ENCODE measurements at regions of chr18 and their contacts with region 1.

Region 1: GRCh38 chr18:24726727-24727492 is 266.5 kb downstream of the HRH4 start:
- DNase-seq: peak; percentile 75
- H3K4me3 ChIP-seq: peak overlapping the region; percentile 3 to 47 (median 19)
- H3K27ac ChIP-seq: no peak overlapping the region
- H3K4me1 ChIP-seq: peaks cover 0 to 4% (median 1%) of the 10 kb centered on the region in 4 donors
- H3K27me3 ChIP-seq: peaks cover 0 to 32% (median 0%) of the 10 kb centered on the region in 4 donors
- CTCF ChIP-seq: peak; percentile 63 to 80 (median 80)
- EP300 ChIP-seq: no peak
- POLR2A ChIP-seq: no peak

Region 2: GRCh38 chr18:24488824-24489493 is 238.0 kb before region 1 on chr18:
- intact Hi-C with region 1: loop called (anchors 5 kb)
- DNase-seq: no peak
- H3K4me3 ChIP-seq: no peak overlapping the region
- H3K27ac ChIP-seq: no peak overlapping the region
- H3K4me1 ChIP-seq: peaks cover 0 to 4% (median 0%) of the 10 kb centered on the region in 4 donors
- H3K27me3 ChIP-seq: no peaks in the 10 kb centered on the region
- CTCF ChIP-seq: peak; percentile 79 to 88 (median 85)
- EP300 ChIP-seq: no peak
- POLR2A ChIP-seq: no peak

Region 3: GRCh38 chr18:24543805-24544498 is 183.0 kb before region 1 on chr18:
- intact Hi-C with region 1: loop called (anchors 2 kb)
- DNase-seq: peak; percentile 19
- H3K4me3 ChIP-seq: no peak overlapping the region
- H3K27ac ChIP-seq: no peak overlapping the region
- H3K4me1 ChIP-seq: no peaks in the 10 kb centered on the region
- H3K27me3 ChIP-seq: no peaks in the 10 kb centered on the region
- CTCF ChIP-seq: peak in 2 of 3 experiments; percentile 18 to 24
- EP300 ChIP-seq: no peak
- POLR2A ChIP-seq: no peak

Region 4: GRCh38 chr18:24595561-24596031 is 131.3 kb before region 1 on chr18:
- intact Hi-C with region 1: loop called (anchors 5 kb)
- DNase-seq: peak; percentile 75
- H3K4me3 ChIP-seq: no peak overlapping the region
- H3K27ac ChIP-seq: no peak overlapping the region
- H3K4me1 ChIP-seq: no peaks in the 10 kb centered on the region
- H3K27me3 ChIP-seq: peaks cover 0 to 8% (median 0%) of the 10 kb centered on the region in 4 donors
- CTCF ChIP-seq: no peak
- EP300 ChIP-seq: no peak
- POLR2A ChIP-seq: no peak

Region 5: DNA sequence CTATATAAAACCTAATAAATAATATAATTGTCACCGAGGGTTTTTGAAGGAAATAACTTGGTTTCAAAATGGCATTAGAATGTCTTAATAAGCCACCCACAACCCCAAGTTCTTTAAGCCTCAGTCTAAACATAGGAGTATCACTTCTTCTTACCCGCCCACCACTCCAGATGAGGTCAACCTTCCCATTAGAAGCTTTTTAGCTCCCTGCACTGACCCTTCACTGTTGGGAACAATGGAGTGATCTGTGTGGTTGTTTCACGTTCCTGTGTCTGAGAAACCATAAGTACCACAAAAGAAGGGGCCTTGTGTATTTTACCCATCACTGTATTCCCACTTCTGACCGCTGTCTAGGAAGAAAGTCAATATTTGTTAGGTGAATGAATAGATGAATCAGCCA is 951.3 kb after region 1 on chr18:
- intact Hi-C with region 1: no loop called
- DNase-seq: no peak
- H3K4me3 ChIP-seq: no peak overlapping the region
- H3K27ac ChIP-seq: no peak overlapping the region
- H3K4me1 ChIP-seq: no peaks in the 10 kb centered on the region
- H3K27me3 ChIP-seq: no peaks in the 10 kb centered on the region
- CTCF ChIP-seq: no peak
- EP300 ChIP-seq: no peak
- POLR2A ChIP-seq: no peak